ENCODE measurements at regions of chr7 and their contacts with region 1.

Region 1: GRCh38 chr7:47979145-47979831 is at the start of gene HUS1:
- DNase-seq: peak; percentile 96
- H3K4me3 Mint-ChIP-seq: peak within 1 kb of the TSS; percentile 87
- H3K27ac Mint-ChIP-seq: peak within 1 kb of the TSS; percentile 97
- H3K4me1 Mint-ChIP-seq: peaks cover 24% of the 10 kb centered on the region
- H3K27me3 Mint-ChIP-seq: peaks cover under 1% of the 10 kb centered on the region
- total RNA-seq, gene HUS1: 34.1 to 35.0 TPM

Region 2: GRCh38 chr7:47954231-47954911 is 24.9 kb before region 1 on chr7:
- CTCF ChIA-PET with region 1: no interaction called
- POLR2A ChIA-PET with region 1: no interaction called
- DNase-seq: no peak
- H3K4me3 Mint-ChIP-seq: no peak overlapping the region
- H3K27ac Mint-ChIP-seq: no peak overlapping the region
- H3K4me1 Mint-ChIP-seq: peaks cover 8% of the 10 kb centered on the region
- H3K27me3 Mint-ChIP-seq: no peaks in the 10 kb centered on the region

Region 3: DNA sequence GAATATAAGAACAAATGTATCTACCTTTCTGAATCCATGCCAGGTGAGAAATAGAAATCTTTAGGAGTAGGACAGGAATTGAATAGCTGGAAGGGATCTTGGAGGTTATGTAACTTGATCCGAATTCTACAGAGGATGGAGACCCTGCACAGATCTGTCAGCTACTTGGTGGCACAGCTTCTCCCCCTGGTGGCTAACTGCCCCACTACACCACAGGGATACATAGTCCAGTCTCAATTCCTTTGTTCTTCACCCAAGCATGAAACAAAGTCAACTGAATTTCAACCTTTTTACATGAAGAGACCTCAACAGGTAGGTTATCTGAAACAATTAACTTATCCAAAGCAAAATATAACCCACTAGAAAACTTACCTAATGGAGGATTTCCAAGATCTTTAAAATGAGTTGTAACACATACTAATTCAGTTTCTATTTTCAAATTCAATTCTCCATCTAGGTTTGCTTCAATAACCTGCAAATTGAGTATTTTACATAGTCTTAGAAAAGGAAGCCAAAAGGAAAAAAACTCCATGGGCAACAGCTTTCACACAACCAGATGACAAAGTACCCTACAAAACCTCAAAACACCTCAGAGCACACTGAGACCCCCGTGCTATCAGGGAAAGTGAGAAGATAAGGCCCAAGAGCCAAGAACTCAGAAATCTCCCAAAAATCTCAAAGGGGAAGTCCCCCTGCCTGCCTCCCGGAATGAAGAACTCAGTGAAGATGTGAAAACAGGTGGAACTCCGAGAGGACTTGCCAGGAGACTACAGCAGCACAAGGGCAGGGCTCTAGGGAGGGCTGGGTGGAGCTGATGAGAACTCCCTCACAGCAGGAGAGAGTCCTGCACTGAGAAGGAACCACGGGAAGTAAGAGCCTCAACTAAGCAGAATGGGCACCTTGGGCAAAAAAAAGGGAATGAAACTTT is 10.2 kb before region 1 on chr7:
- CTCF ChIA-PET with region 1: interaction called, 11 read pairs
- POLR2A ChIA-PET with region 1: no interaction called
- DNase-seq: peak; percentile 52
- H3K4me3 Mint-ChIP-seq: no peak overlapping the region
- H3K27ac Mint-ChIP-seq: no peak overlapping the region
- H3K4me1 Mint-ChIP-seq: peaks cover 14% of the 10 kb centered on the region
- H3K27me3 Mint-ChIP-seq: no peaks in the 10 kb centered on the region

Region 4: GRCh38 chr7:48109848-48110663 is 130.8 kb after region 1 on chr7:
- CTCF ChIA-PET with region 1: interaction called, 11 read pairs
- POLR2A ChIA-PET with region 1: interaction called, 11 read pairs
- DNase-seq: peak; percentile 90
- H3K4me3 Mint-ChIP-seq: no peak overlapping the region
- H3K27ac Mint-ChIP-seq: peak overlapping the region; percentile 52
- H3K4me1 Mint-ChIP-seq: peaks cover 14% of the 10 kb centered on the region
- H3K27me3 Mint-ChIP-seq: no peaks in the 10 kb centered on the region

Measured in activated CD4-positive, alpha-beta memory T cell treated with anti-CD3 and anti-CD28 coated beads, Interleukin-2, amount 10 ng/mL, durations not matched to agents 7 days and 5 days (primary cell).